HepG2 (cell line): ENCODE measurements at regions of chr12 and their contacts with region 1.

Region 1: DNA sequence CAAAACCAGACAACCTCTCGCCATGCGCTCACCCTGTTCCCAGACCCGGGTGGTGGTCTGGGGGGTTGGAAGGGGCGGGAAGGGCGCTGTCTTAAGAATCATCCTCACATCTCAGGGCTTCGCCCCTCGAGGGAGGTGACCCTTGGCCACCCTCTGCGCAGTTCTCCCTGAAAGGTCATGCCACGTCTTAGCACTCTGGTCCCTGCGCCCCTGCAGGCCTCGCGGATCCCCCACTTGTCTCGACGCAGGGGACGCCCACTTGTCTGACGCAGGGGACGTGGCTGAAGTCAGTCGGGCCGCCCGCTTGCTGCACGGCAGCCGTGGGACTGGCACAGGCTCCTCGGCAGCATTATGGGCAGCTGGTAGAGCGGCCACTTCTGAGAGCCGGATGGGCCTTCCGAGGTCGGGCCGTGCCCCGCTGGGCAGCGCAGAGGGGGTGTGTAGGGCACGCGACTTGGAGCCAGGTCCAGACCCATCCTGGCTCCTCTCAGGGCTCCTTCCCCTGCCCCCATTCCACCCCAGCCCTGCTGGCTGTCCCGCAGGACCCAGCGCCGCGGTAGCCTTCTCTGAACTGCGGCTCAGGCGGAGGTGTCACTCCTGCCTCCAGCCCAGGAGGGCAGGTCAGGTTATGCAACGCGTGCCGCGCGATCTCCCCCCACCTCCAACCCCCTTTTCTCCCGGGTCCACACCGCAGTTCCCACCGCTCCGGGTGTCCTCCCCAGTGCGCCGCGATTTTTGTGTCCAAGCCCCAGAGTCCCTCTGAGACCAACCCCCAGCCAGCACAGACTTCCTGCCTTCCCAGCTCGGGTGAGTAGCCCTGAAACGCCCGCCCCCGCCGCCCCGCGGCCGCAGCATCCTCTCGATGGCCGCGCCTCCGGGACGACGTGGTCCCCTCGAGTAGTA is 40.9 kb upstream of the CAPRIN2 start:
- DNase-seq: peak; percentile 48
- ATAC-seq: peak; percentile 92
- H3K4me3 ChIP-seq: peak overlapping the region; percentile 62 to 77 (median 64)
- H3K27ac ChIP-seq: no peak overlapping the region
- H3K4me1 ChIP-seq: peaks cover 42% of the 10 kb centered on the region
- H3K27me3 ChIP-seq: no peaks in the 10 kb centered on the region
- CTCF ChIP-seq: peak; percentile 12; the same call in 1 of the 2 replicates
- EP300 ChIP-seq: no peak
- POLR2A ChIP-seq: no peak
- RAD21 ChIP-seq: no peak

Region 2: GRCh38 chr12:30695199-30696103 is 100.2 kb before region 1 on chr12 and contains the start of gene IPO8:
- CTCF ChIA-PET with region 1: no interaction called
- POLR2A ChIA-PET with region 1: interaction called, 3 read pairs
- in situ Hi-C with region 1: no loop called
- intact Hi-C with region 1: loop called (anchors 10 kb)
- DNase-seq: peak; percentile 93
- ATAC-seq: peak; percentile 89
- H3K4me3 ChIP-seq: peak within 1 kb of the TSS; percentile 93 to 99 (median 96)
- H3K27ac ChIP-seq: peak within 1 kb of the TSS; percentile 84
- H3K4me1 ChIP-seq: peaks cover 49% of the 10 kb centered on the region
- H3K27me3 ChIP-seq: no peaks in the 10 kb centered on the region; a peak in 1 of 5 replicates
- CTCF ChIP-seq: peak; percentile 1; the same call in 1 of the 2 replicates
- EP300 ChIP-seq: no peak
- POLR2A ChIP-seq: peak; percentile 48 to 49; a peak in 3 of 4 replicates
- RAD21 ChIP-seq: no peak
- total RNA-seq, gene IPO8: 21.8 and 40.0 TPM in 2 replicates

Region 3: GRCh38 chr12:30853561-30854133 is 58.0 kb after region 1 on chr12:
- CTCF ChIA-PET with region 1: no interaction called
- POLR2A ChIA-PET with region 1: no interaction called
- in situ Hi-C with region 1: no loop called
- intact Hi-C with region 1: no loop called
- DNase-seq: no peak
- ATAC-seq: peak; percentile 47
- H3K4me3 ChIP-seq: no peak overlapping the region
- H3K27ac ChIP-seq: no peak overlapping the region
- H3K4me1 ChIP-seq: no peaks in the 10 kb centered on the region
- H3K27me3 ChIP-seq: no peaks in the 10 kb centered on the region; a peak in 1 of 5 replicates
- CTCF ChIP-seq: no peak
- EP300 ChIP-seq: no peak
- POLR2A ChIP-seq: no peak
- RAD21 ChIP-seq: no peak